GM12878 (cell line): ENCODE measurements at regions of chr1 and their contacts with region 1.

Region 1: GRCh38 chr1:91929250-91929649 is 20.0 kb upstream of the BRDT start:
- DNase-seq: no peak
- ATAC-seq: no peak
- H3K4me3 ChIP-seq: no peak overlapping the region
- H3K27ac ChIP-seq: no peak overlapping the region
- H3K4me1 ChIP-seq: no peaks in the 10 kb centered on the region
- H3K27me3 ChIP-seq: no peaks in the 10 kb centered on the region
- CTCF ChIP-seq: no peak
- EP300 ChIP-seq: no peak
- POLR2A ChIP-seq: no peak
- RAD21 ChIP-seq: no peak

Region 2: GRCh38 chr1:91404151-91405012 is 524.9 kb before region 1 on chr1 and contains the start of gene HFM1:
- CTCF ChIA-PET with region 1: interaction called, 3 read pairs
- POLR2A ChIA-PET with region 1: no interaction called
- RAD21 ChIA-PET with region 1: no interaction called
- SMC1A ChIA-PET with region 1: no interaction called
- in situ Hi-C with region 1: no loop called
- intact Hi-C with region 1: loop called (anchors 5 kb)
- DNase-seq: no peak
- ATAC-seq: peak; percentile 97
- H3K4me3 ChIP-seq: peak within 1 kb of the TSS; percentile 60
- H3K27ac ChIP-seq: no peak within 1 kb of the TSS
- H3K4me1 ChIP-seq: no peaks in the 10 kb centered on the region
- H3K27me3 ChIP-seq: peaks cover 0 to 10% of the 10 kb centered on the region in 2 experiments; a peak in 3 of 4 replicates
- CTCF ChIP-seq: no peak
- EP300 ChIP-seq: no peak
- POLR2A ChIP-seq: no peak
- RAD21 ChIP-seq: no peak
- polyA plus RNA-seq, gene HFM1: not detected

Region 3: DNA sequence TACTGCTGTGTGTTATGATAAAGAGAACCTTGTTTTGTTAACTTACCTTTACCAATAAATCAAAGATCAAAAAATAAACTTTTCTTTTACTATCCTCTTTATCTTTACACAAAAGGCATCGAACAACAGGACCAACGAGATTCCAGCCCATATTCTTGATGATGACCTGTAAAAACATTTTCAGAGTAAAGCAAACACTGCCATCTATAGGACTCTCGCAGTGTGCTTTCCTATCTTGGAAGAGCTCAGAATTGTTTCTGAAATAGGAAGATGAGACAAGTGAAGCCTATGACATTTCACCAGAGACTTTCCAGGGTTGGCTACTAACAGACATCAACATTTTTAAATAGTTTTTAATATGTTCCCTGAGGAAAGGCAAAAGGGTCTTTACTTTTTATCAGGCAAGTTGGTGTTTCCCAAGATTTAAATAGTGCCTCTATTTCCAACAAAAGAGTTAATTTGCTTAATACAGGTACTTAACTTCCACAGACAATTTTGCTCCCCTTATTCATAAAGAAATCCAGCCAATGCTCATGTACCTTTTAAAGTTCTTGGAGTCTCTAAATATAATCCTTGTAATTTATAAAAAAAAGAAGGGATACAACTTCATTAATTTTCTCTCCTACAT is 362.2 kb after region 1 on chr1:
- CTCF ChIA-PET with region 1: interaction called, 5 read pairs
- POLR2A ChIA-PET with region 1: no interaction called
- RAD21 ChIA-PET with region 1: no interaction called
- SMC1A ChIA-PET with region 1: interaction called, 5 read pairs
- in situ Hi-C with region 1: no loop called
- intact Hi-C with region 1: loop called (anchors 5 kb)
- DNase-seq: no peak
- ATAC-seq: peak; percentile 86
- H3K4me3 ChIP-seq: no peak overlapping the region
- H3K27ac ChIP-seq: no peak overlapping the region
- H3K4me1 ChIP-seq: no peaks in the 10 kb centered on the region
- H3K27me3 ChIP-seq: no peaks in the 10 kb centered on the region
- CTCF ChIP-seq: peak; percentile 54 to 72 (median 56); a peak in 5 of 6 replicates
- EP300 ChIP-seq: no peak
- POLR2A ChIP-seq: no peak
- RAD21 ChIP-seq: peak; percentile 58